ENCODE measurements at regions of chr17 and their contacts with region 1.

Region 1: DNA sequence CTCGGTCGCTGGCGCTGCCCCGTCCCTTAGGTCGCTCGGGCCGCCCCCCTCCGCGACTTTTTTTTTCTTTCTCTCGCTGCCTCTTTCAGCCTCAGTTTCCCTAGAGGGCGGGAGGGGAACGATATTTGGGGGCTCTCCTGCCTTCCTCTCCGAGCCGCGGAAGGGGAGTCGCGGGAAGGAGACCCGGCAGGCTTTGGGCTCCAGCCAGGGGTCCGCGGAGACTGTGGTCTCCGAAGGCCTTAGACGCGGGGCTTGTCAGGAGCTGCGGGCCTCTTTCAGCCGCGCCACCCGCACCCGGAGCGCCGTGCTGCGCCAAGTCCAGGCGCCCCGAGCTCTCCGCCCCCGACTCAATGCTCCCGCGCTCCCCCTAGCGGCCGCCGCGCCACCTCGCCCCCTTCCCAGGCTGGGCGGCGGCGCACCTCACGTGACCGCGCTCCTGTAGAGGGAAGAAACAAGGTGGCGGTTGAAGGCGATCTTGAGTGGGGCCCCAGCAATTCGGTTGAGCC is at the start of gene LRRC37B:
- DNase-seq: peak; percentile 87
- H3K4me3 Mint-ChIP-seq: peak within 1 kb of the TSS; percentile 93
- H3K27ac Mint-ChIP-seq: peak within 1 kb of the TSS; percentile 90
- H3K4me1 Mint-ChIP-seq: peaks cover 36% of the 10 kb centered on the region
- H3K27me3 Mint-ChIP-seq: no peaks in the 10 kb centered on the region
- total RNA-seq, gene LRRC37B: 16.7 and 22.7 TPM in 2 replicates

Region 2: GRCh38 chr17:32020943-32021614 is 14.1 kb after region 1 on chr17:
- intact Hi-C with region 1: loop called (anchors 1 kb)
- DNase-seq: no peak
- H3K4me3 Mint-ChIP-seq: no peak overlapping the region
- H3K27ac Mint-ChIP-seq: no peak overlapping the region
- H3K4me1 Mint-ChIP-seq: peaks cover 24% of the 10 kb centered on the region
- H3K27me3 Mint-ChIP-seq: no peaks in the 10 kb centered on the region

Region 3: DNA sequence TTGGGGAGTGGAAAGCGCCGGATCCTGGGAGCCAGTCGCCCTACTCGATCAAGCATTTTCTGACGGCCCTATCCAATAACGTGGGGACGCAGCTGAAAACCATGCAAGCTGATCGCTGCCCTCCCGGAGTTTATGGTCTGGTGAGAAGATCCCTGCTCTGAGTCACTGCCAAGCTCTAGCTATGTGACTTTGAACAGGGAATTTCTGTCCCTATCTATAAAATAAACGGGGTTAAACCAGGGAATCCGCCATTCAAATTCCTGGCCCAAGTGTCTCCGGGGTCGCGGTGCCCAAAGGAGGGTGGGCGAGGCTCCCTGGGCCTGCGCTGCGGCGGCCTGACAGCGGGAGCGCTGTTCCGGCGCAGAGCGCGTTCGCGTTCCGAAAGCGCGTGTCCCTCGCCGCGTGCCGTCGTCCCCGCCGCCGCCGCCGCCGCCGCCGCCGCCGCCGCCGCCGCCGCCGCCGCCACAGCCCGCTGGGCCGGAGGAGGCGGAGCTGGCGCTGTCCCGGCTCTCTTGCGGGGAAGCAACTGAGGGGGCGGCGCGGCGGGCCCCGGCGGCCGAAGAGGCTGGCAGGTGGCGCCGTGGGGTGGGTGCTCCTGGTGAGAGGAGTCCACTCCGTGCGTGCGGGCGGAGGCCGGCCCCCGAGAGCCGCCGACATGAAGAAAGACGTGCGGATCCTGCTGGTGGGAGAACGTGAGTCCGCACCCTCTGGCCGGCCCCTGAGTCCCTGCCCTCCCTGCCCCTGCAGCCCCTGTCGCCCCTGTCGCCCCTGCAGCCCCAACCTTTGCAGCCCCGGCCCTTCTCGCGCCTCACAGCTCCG is 135.2 kb after region 1 on chr17 and contains the start of gene RHOT1:
- intact Hi-C with region 1: loop called (anchors 1 kb)
- DNase-seq: peak; percentile 76
- H3K4me3 Mint-ChIP-seq: peak within 1 kb of the TSS; percentile 96
- H3K27ac Mint-ChIP-seq: peak within 1 kb of the TSS; percentile 92
- H3K4me1 Mint-ChIP-seq: peaks cover 25% of the 10 kb centered on the region
- H3K27me3 Mint-ChIP-seq: no peaks in the 10 kb centered on the region
- total RNA-seq, gene RHOT1: 25.9 and 27.2 TPM in 2 replicates

Region 4: DNA sequence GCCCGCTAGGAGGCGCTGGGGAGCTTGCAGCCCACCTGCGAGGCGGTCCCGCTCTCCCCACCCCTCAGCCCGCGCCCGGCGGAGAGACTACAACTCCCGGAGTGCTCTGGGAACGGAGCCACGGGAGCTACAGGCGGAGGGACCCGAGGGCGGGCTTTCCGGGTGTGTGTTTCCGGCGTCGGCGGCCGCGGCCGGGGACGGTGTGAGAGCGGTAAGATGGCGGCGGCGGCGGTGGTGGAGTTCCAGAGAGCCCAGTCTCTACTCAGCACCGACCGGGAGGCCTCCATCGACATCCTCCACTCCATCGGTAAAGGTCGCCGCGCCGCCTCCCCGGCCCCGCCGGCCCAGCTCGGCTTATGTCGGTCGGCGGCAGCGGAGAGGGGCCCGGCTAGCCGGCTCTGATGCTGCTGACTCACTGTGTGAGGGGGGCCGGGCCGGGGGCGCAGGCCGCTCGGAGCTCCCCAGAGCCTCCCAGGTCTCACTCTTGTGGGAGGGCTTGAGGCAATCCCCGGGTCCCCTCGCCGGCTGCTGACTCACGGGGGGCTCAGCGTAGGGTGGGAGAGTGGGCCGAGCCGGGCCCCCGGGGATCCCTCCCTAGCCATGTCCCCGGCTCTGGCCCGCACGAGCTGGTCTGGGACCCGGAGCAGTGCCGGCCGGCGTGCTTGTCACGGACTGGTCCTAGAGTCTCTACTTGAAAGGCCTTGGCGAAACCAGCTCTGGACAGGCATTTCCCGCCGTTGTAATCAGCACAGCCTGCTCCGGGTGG is 437.5 kb after region 1 on chr17 and contains the start of gene PSMD11:
- intact Hi-C with region 1: loop called (anchors 5 kb)
- DNase-seq: peak; percentile 98
- H3K4me3 Mint-ChIP-seq: peak within 1 kb of the TSS; percentile 94
- H3K27ac Mint-ChIP-seq: peak within 1 kb of the TSS; percentile 88
- H3K4me1 Mint-ChIP-seq: peaks cover 28% of the 10 kb centered on the region
- H3K27me3 Mint-ChIP-seq: peaks cover 5% of the 10 kb centered on the region
- total RNA-seq, gene PSMD11: 190 and 198 TPM in 2 replicates

Measured in activated T-helper 1 cell treated with anti-CD3 and anti-CD28 coated beads, Interleukin-12 subunit alpha, Interleukin-12 subunit beta, Interleukin-2, Interleukin-4 antibody, amounts not matched to agents 30 ng/mL and 10 ng/mL and 1 ng/mL, durations not matched to agents 14 hours and 24 hours and 36 hours (primary cell).